AG04450 (cell line): ENCODE measurements at regions of chr6 and their contacts with region 1.

Region 1: GRCh38 chr6:100001915-100002388 is 7.9 kb upstream of the MCHR2 start:
- DNase-seq: peak; percentile 21
- H3K4me3 ChIP-seq: no peak overlapping the region
- H3K27ac ChIP-seq: no peak overlapping the region
- H3K27me3 ChIP-seq: peaks cover 5% of the 10 kb centered on the region
- CTCF ChIP-seq: peak; percentile 95

Region 2: DNA sequence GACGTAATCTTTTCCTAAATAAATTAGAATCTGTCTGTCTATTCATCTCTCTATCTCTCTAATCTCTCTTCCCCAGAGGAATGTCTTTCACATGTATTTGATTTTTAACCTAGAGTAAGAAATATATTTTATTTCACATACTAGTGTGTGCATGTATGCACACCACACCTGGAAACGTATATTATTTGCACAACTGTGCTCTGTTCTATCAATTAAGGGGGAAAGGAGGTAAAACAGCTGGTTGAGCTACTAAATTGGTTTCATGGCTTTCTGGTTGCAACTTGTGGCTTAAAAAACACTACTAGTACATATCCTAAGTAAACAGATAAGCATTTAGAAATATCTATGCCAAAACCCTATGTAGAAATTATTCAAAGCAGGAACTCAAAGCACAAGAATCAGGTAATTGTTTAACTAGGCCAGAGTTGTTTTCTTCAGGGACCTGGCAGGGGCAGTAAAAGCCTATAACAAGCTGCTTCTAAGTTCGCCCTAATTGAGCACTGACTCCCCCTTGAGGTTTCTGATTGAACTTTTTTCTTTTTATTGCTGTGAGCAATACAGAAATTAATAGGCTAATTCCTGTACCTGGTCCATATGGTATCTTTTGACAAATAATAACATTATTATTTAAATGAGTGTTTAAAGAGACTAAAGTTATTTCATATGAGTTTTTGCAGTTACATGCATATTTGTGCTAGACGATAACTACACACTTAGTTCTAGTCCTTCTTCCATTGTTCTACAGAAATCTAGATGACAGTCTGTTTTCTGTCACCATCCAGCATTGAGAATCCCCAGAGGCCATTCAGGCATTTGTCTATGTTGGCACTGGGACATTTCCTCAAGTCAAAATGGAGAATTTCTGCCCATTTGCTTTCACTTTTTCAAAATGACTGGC is 96.5 kb before region 1 on chr6:
- CTCF ChIA-PET with region 1: interaction called, 24 read pairs
- POLR2A ChIA-PET with region 1: no interaction called
- DNase-seq: no peak
- H3K4me3 ChIP-seq: no peak overlapping the region
- H3K27ac ChIP-seq: no peak overlapping the region
- H3K27me3 ChIP-seq: peaks cover 4% of the 10 kb centered on the region
- CTCF ChIP-seq: peak; percentile 74

Region 3: DNA sequence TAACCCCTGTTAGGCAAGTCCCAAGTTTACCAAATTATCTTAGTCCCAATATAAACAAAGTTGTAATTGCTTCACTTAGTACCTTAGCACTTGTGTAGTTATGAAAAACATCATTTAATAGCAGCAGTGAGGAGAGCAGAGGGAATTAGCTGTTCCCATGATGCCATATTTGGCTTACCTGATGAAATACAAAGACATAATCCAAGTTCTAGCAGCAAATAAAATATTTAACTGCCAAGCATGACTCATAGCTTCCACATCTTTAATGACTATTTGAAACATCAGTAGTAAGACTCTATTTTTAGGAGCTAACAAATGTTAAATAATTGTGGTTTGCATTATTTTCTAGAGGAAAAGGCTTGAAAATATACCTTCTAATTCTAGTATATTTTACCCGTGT is 86.1 kb after region 1 on chr6:
- CTCF ChIA-PET with region 1: interaction called, 13 read pairs
- POLR2A ChIA-PET with region 1: no interaction called
- DNase-seq: peak; percentile 4
- H3K4me3 ChIP-seq: no peak overlapping the region
- H3K27ac ChIP-seq: no peak overlapping the region
- H3K27me3 ChIP-seq: no peaks in the 10 kb centered on the region
- CTCF ChIP-seq: no peak